Activated CD4-positive, alpha-beta T cell treated with anti-CD3 and anti-CD28 coated beads for 36 hours (primary cell): ENCODE measurements at regions of chr1 and their contacts with region 1.

Region 1: GRCh38 chr1:9910425-9911178 is 533 bp upstream of the CTNNBIP1 start:
- DNase-seq: peak; percentile 100
- ATAC-seq: peak; percentile 96
- H3K4me3 Mint-ChIP-seq: peak overlapping the region; percentile 82
- H3K27ac Mint-ChIP-seq: peak overlapping the region; percentile 92
- H3K4me1 Mint-ChIP-seq: peaks cover 23% of the 10 kb centered on the region
- H3K27me3 Mint-ChIP-seq: no peaks in the 10 kb centered on the region

Region 2: GRCh38 chr1:8878448-8879347 is 1031.9 kb before region 1 on chr1 and contains the start of gene ENO1:
- CTCF ChIA-PET with region 1: no interaction called
- POLR2A ChIA-PET with region 1: no interaction called
- intact Hi-C with region 1: loop called in 1 of 2 experiments (anchors 2 kb)
- DNase-seq: peak; percentile 99
- ATAC-seq: peak; percentile 72
- H3K4me3 Mint-ChIP-seq: peak within 1 kb of the TSS; percentile 90
- H3K27ac Mint-ChIP-seq: peak within 1 kb of the TSS; percentile 99
- H3K4me1 Mint-ChIP-seq: peaks cover 35% of the 10 kb centered on the region
- H3K27me3 Mint-ChIP-seq: no peaks in the 10 kb centered on the region
- total RNA-seq, gene ENO1: 2,573 to 3,583 TPM

Region 3: DNA sequence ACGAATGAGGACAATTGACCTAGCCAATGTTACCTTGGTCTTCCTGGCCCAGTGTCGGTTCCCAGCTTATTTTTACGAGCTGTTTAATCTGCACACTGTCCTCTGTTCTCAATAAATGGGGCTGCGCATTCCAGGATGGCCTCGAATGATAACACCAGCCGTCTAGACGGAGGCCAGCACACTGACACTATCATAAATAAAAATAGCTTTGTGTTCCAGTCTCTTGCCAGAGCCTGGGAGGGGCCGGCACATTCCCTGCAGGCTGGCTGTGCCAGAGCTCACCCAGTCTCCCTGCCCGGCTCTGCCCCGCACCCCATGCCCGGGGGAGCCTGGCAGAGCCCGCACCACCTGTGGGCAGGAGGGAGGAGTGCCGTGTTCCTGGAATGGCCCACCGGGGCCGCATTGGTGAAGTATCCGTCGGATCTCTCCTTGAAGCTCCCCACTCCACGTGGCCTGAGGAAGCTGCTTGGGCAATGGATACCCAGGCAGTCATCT is 525.8 kb before region 1 on chr1:
- CTCF ChIA-PET with region 1: no interaction called
- POLR2A ChIA-PET with region 1: no interaction called
- intact Hi-C with region 1: no loop called
- DNase-seq: no peak
- ATAC-seq: no peak
- H3K4me3 Mint-ChIP-seq: no peak overlapping the region
- H3K27ac Mint-ChIP-seq: no peak overlapping the region
- H3K4me1 Mint-ChIP-seq: peaks cover 4% of the 10 kb centered on the region
- H3K27me3 Mint-ChIP-seq: no peaks in the 10 kb centered on the region

Region 4: DNA sequence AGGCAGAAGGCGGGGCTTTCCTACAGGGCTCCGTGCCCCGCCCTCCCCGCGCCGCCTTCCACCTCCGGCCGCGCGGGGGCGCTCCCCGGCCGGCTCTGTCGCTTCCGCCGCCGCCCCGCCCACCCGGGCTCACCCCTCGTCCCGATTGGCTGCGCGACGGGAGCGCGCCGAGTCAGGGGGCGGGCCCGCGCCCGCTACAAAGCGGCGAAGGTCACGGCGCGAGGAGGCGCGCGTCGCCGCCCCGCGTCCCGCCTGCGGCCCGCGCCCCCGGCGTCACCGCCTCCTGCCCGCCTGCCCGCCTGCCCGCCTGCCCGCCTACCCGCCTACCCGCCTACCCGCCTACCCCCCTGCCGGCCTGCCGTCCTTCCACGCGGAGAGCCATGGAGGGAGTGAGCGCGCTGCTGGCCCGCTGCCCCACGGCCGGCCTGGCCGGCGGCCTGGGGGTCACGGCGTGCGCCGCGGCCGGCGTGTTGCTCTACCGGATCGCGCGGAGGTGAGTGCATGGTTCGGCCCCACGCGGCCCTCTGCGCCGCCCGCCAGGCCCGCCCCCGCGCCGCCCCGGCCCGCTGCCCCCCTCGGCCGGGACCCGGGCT is 322.0 kb before region 1 on chr1 and contains the start of gene TMEM201:
- CTCF ChIA-PET with region 1: interaction called, 3 read pairs
- POLR2A ChIA-PET with region 1: no interaction called
- intact Hi-C with region 1: loop called in 1 of 2 experiments (anchors 1 kb)
- DNase-seq: peak; percentile 97
- ATAC-seq: peak; percentile 92
- H3K4me3 Mint-ChIP-seq: peak within 1 kb of the TSS; percentile 80
- H3K27ac Mint-ChIP-seq: peak within 1 kb of the TSS; percentile 79
- H3K4me1 Mint-ChIP-seq: peaks cover 26% of the 10 kb centered on the region
- H3K27me3 Mint-ChIP-seq: no peaks in the 10 kb centered on the region
- total RNA-seq, gene TMEM201: 14.6 to 15.1 TPM

Region 5: DNA sequence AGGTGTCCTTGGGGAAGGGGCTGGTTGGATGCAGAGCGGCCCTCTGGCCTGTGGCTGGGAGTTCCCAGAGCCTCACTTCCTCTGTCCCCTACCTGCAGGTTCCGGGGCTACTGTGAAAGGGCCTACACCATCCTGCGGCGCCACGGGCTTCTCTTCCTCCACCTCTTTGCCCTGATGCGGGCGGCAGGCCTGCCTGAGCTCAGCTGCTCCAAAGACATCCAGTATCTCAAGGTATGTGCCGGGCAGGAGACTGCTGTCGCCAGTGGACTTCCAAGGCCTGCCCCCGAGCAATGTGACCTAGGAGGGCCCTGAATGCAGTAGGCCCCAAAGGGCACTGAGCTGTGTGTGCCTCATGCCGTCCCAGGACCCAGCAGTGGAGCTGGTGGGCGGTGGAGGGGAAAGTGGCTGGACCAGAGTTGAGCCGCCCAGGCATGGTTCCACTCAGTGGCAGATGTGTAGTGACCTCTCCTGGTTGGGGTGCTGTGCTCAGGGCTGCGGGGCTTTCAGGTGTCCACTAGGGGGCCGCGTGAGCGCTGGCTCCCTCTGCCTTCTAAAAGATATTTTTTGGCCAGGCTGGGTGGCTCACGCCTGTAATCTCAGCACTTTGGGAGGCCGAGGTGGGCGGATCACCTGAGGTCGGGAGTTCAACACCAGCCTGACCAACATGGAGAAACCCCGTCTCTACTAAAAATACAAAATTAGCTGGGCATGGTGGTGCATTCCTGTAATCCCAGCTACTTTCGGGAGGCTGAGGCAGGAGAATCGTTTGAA is 185.7 kb before region 1 on chr1:
- CTCF ChIA-PET with region 1: interaction called, 3 read pairs
- POLR2A ChIA-PET with region 1: no interaction called
- intact Hi-C with region 1: loop called in 1 of 2 experiments (anchors 2 kb)
- DNase-seq: peak; percentile 84
- ATAC-seq: peak; percentile 24
- H3K4me3 Mint-ChIP-seq: no peak overlapping the region
- H3K27ac Mint-ChIP-seq: no peak overlapping the region
- H3K4me1 Mint-ChIP-seq: peaks cover 61% of the 10 kb centered on the region
- H3K27me3 Mint-ChIP-seq: no peaks in the 10 kb centered on the region

Region 6: DNA sequence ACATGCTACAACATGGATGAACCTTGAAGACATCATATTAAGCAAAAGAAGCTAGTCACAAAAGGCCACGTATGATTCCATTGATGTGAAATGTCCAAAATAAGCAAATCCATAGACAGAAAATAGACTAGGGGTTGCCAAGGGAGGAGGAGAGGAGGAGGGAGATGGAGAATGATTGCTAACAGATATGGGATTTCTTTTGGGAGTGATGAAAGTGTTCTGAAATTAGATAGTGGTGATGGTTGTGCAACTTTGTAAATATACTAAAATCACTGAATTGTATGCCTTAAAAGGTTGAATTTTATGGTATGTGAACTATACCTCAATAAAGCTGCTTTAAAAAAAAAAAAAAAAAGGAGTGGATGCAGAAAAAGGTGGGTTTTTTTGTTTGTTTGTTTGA is 94.4 kb before region 1 on chr1:
- CTCF ChIA-PET with region 1: no interaction called
- POLR2A ChIA-PET with region 1: no interaction called
- intact Hi-C with region 1: no loop called
- DNase-seq: no peak
- ATAC-seq: no peak
- H3K4me3 Mint-ChIP-seq: no peak overlapping the region
- H3K27ac Mint-ChIP-seq: no peak overlapping the region
- H3K4me1 Mint-ChIP-seq: peaks cover 11% of the 10 kb centered on the region
- H3K27me3 Mint-ChIP-seq: no peaks in the 10 kb centered on the region

Region 7: GRCh38 chr1:10032590-10033358 is 122.2 kb after region 1 on chr1 and contains the start of gene UBE4B:
- CTCF ChIA-PET with region 1: no interaction called
- POLR2A ChIA-PET with region 1: no interaction called
- intact Hi-C with region 1: loop called (anchors 1 kb)
- DNase-seq: peak; percentile 99
- ATAC-seq: peak; percentile 96
- H3K4me3 Mint-ChIP-seq: peak within 1 kb of the TSS; percentile 88
- H3K27ac Mint-ChIP-seq: peak within 1 kb of the TSS; percentile 74
- H3K4me1 Mint-ChIP-seq: peaks cover 24% of the 10 kb centered on the region
- H3K27me3 Mint-ChIP-seq: no peaks in the 10 kb centered on the region
- total RNA-seq, gene UBE4B: 26.1 to 31.8 TPM

Region 8: DNA sequence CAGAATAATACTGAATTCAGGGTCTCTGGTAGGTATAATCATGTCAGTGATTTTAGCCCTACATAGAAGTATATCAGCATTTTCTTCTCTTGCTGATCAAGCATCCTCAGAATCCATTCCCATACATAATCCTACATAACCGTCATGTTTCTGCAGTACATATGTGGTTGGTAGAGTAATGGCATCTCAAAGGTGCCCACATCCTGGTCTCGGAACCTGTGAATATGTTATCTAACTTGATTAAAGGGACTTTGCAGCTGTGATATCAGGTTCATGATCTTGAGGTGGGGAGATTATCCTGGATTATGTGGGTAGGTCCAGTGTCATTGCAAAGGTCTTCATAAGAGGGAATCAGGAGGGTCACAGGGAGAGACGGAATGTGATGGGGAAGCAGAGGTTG is 230.4 kb after region 1 on chr1:
- CTCF ChIA-PET with region 1: no interaction called
- POLR2A ChIA-PET with region 1: no interaction called
- intact Hi-C with region 1: no loop called
- DNase-seq: no peak
- ATAC-seq: no peak
- H3K4me3 Mint-ChIP-seq: no peak overlapping the region
- H3K27ac Mint-ChIP-seq: no peak overlapping the region
- H3K4me1 Mint-ChIP-seq: no peaks in the 10 kb centered on the region
- H3K27me3 Mint-ChIP-seq: no peaks in the 10 kb centered on the region

Region 9: GRCh38 chr1:10472220-10473144 is 561.9 kb after region 1 on chr1 and contains the start of gene DFFA:
- CTCF ChIA-PET with region 1: no interaction called
- POLR2A ChIA-PET with region 1: no interaction called
- intact Hi-C with region 1: loop called in 1 of 2 experiments (anchors 1 kb)
- DNase-seq: peak; percentile 96
- ATAC-seq: peak; percentile 83
- H3K4me3 Mint-ChIP-seq: peak within 1 kb of the TSS; percentile 97
- H3K27ac Mint-ChIP-seq: peak within 1 kb of the TSS; percentile 92
- H3K4me1 Mint-ChIP-seq: peaks cover 38% of the 10 kb centered on the region
- H3K27me3 Mint-ChIP-seq: no peaks in the 10 kb centered on the region
- total RNA-seq, gene DFFA: 45.7 to 46.4 TPM

Region 10: DNA sequence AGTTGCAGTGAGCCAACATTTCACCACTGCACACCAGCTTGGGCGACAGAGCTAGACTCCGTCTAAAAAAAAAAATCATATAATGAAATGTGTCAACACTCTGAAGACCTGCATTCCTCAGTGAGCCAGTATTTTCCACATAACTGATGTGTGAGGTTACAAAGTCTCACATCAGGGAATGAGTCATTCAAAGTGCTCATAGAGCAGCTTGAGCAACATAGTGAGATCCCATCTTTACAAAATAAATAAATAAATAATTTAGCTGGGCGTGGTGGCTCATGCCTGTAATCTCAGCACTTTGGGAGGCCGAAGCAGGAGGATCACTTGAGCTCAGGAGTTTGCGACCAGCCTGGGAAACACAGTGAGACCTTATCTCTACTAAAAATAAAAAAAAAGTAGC is 820.4 kb after region 1 on chr1:
- CTCF ChIA-PET with region 1: no interaction called
- POLR2A ChIA-PET with region 1: no interaction called
- intact Hi-C with region 1: no loop called
- DNase-seq: peak; percentile 29
- ATAC-seq: peak; percentile 63
- H3K4me3 Mint-ChIP-seq: no peak overlapping the region
- H3K27ac Mint-ChIP-seq: no peak overlapping the region
- H3K4me1 Mint-ChIP-seq: peaks cover 20% of the 10 kb centered on the region
- H3K27me3 Mint-ChIP-seq: no peaks in the 10 kb centered on the region

Region 11: DNA sequence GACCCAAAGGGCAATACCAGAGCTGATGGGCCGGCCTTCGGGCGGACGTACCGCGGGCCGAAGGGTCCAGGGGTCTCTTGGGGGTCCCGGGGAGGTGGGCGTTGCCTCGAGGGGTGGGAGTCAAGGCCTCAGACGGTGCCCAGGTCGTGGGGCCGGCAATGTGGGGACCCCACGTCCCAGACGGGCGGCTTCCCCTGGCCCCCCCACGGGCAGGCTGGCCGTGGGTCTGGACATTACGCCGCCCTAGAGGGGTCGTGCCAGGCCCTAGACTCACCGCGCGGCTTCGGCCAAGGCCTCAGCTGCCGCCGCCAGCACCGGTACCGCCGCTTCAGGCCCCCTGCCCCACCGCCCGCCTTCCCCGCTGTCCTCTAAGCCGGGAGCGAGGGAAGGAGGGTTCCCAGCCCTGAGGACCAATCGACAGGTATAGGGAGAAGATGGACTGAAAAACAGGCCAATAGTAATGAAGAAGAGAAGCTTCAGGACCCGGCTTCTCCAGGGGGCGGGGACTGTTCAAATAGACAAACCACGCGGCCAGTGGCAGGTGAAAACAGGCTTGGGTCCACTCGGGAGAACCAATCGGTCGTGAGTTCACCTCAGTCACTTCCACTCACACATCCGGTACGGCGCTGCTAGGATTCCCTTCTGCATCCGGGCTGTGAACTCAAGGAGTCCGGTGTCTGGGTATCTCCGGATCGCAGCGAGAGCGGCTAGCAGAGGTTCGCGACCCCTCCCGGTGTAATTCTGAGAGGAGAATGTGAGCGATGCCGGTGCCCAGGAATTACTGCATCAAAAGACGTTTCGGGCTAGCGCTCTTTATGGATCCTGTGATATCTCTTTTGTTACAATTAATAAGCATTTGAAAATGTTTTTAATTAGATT is 1351.8 kb after region 1 on chr1 and contains the start of gene MTOR:
- CTCF ChIA-PET with region 1: no interaction called
- POLR2A ChIA-PET with region 1: no interaction called
- intact Hi-C with region 1: loop called in 1 of 2 experiments (anchors 1 kb)
- DNase-seq: peak; percentile 98
- ATAC-seq: peak; percentile 98
- H3K4me3 Mint-ChIP-seq: peak within 1 kb of the TSS; percentile 90
- H3K27ac Mint-ChIP-seq: peak within 1 kb of the TSS; percentile 87
- H3K4me1 Mint-ChIP-seq: peaks cover 15% of the 10 kb centered on the region
- H3K27me3 Mint-ChIP-seq: no peaks in the 10 kb centered on the region
- total RNA-seq, gene MTOR: 32.3 to 36.3 TPM